ENCODE measurements at regions of chr6 and their contacts with region 1.

Region 1: GRCh38 chr6:154247119-154247861 is 109.3 kb downstream of the IPCEF1 start:
- DNase-seq: peak; percentile 55
- H3K4me3 Mint-ChIP-seq: peak overlapping the region; percentile 87
- H3K27ac Mint-ChIP-seq: peak overlapping the region; percentile 79
- H3K4me1 Mint-ChIP-seq: peaks cover 80% of the 10 kb centered on the region
- H3K27me3 Mint-ChIP-seq: no peaks in the 10 kb centered on the region

Region 2: GRCh38 chr6:154197196-154197860 is 50.0 kb before region 1 on chr6:
- CTCF ChIA-PET with region 1: interaction called, 3 read pairs
- POLR2A ChIA-PET with region 1: no interaction called
- intact Hi-C with region 1: loop called (anchors 2 kb)
- DNase-seq: no peak
- H3K4me3 Mint-ChIP-seq: peak overlapping the region; percentile 14
- H3K27ac Mint-ChIP-seq: peak overlapping the region; percentile 39
- H3K4me1 Mint-ChIP-seq: peaks cover 55% of the 10 kb centered on the region
- H3K27me3 Mint-ChIP-seq: no peaks in the 10 kb centered on the region

Region 3: GRCh38 chr6:154267508-154268106 is 20.3 kb after region 1 on chr6:
- CTCF ChIA-PET with region 1: interaction called, 6 read pairs
- POLR2A ChIA-PET with region 1: interaction called, 3 read pairs
- intact Hi-C with region 1: loop called (anchors 1 kb)
- DNase-seq: peak; percentile 17
- H3K4me3 Mint-ChIP-seq: no peak overlapping the region
- H3K27ac Mint-ChIP-seq: no peak overlapping the region
- H3K4me1 Mint-ChIP-seq: peaks cover 21% of the 10 kb centered on the region
- H3K27me3 Mint-ChIP-seq: no peaks in the 10 kb centered on the region

Region 4: GRCh38 chr6:154352898-154353585 is 105.8 kb after region 1 on chr6:
- CTCF ChIA-PET with region 1: interaction called, 5 read pairs
- POLR2A ChIA-PET with region 1: no interaction called
- intact Hi-C with region 1: loop called (anchors 2 kb)
- DNase-seq: peak; percentile 73
- H3K4me3 Mint-ChIP-seq: no peak overlapping the region
- H3K27ac Mint-ChIP-seq: no peak overlapping the region
- H3K4me1 Mint-ChIP-seq: peaks cover 25% of the 10 kb centered on the region
- H3K27me3 Mint-ChIP-seq: peaks cover 36% of the 10 kb centered on the region

Region 5: DNA sequence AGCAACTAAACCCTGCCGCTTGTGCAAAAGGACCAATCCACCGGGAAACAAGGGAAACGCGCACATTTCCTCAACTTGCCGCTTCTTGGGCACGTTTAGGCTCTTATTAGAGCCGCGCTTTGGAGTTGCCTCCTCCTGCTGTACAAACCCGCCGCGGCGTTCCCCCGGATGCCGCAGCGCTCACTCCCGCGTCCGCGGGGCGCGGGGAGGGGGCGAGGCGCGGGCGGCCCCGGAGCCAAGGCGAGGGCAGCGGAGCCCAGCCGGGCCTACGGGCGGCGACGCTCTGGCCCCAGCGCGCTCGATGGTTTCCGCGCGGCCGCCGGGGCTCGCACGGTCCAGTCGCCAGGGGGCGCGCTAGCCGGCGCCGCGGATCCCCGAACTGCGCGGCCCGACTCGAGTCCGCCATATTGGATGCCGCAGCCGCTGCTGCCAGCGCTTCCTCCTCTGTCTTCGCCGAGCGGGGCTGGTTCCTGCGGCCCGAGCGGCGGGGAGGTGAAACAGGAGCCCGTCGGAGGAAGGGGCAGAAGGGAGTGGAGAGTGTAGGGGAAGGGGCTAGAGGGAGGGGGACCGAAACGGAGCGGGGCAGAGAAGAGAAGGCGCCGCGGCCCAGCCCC is 485.8 kb after region 1 on chr6 and contains the start of gene SCAF8:
- CTCF ChIA-PET with region 1: no interaction called
- POLR2A ChIA-PET with region 1: no interaction called
- intact Hi-C with region 1: loop called (anchors 5 kb)
- DNase-seq: peak; percentile 86
- H3K4me3 Mint-ChIP-seq: peak within 1 kb of the TSS; percentile 85
- H3K27ac Mint-ChIP-seq: peak within 1 kb of the TSS; percentile 84
- H3K4me1 Mint-ChIP-seq: peaks cover 34% of the 10 kb centered on the region
- H3K27me3 Mint-ChIP-seq: no peaks in the 10 kb centered on the region
- total RNA-seq, gene SCAF8: 30.1 to 31.7 TPM